HCT116 (cell line): ENCODE measurements at regions of chr4 and their contacts with region 1.

Region 1: DNA sequence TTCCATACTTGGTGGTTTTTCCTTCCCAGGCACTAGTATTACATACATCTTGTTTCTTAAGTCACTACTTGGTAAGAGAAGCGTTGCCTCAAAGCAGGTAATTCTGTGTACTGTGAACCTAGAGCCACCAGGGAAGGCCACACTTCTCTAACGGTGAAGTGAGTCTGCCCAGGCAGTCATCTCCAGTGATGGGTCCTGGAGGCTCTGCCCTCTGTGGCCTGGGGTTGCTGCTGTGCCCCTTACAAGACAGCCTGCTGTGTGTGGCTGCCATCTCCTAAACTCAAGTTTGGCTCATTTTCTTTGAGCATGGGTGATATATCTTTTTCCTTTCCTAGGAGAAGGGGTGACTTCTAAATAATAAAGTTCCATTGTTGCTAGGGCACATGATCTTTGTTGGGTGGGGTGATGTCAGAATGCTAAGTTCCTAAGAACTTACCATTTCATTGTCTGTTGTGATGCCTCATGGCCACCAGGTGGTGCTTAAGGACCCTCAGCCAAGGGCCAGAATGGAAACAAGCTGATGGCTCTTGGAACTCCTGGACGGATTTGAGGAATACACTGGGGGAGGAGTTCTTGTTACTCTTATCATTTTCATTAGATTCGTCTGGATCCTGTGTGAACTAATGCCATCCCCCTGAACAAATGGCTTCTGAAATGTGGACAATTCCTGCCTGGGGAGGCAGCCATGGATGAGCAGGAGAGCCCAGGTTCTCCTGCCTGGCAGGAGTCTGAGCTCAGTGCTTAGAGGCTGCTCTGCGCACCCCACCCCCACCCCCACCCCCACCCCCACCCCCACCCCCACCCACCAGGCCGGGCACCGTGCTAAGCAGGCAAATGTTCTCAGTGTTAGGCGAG is 41.1 kb upstream of the WDR1 start:
- DNase-seq: peak; percentile 73
- ATAC-seq: peak; percentile 93
- H3K4me3 ChIP-seq: no peak overlapping the region
- H3K27ac ChIP-seq: no peak overlapping the region
- H3K4me1 ChIP-seq: peaks cover 3 to 8% of the 10 kb centered on the region in 2 experiments; a peak in 2 of 4 replicates
- H3K27me3 ChIP-seq: peaks cover 9% of the 10 kb centered on the region; the same call in 1 of the 2 replicates
- CTCF ChIP-seq: peak; percentile 83 to 87 (median 86)
- POLR2A ChIP-seq: no peak
- RAD21 ChIP-seq: peak; percentile 85

Region 2: DNA sequence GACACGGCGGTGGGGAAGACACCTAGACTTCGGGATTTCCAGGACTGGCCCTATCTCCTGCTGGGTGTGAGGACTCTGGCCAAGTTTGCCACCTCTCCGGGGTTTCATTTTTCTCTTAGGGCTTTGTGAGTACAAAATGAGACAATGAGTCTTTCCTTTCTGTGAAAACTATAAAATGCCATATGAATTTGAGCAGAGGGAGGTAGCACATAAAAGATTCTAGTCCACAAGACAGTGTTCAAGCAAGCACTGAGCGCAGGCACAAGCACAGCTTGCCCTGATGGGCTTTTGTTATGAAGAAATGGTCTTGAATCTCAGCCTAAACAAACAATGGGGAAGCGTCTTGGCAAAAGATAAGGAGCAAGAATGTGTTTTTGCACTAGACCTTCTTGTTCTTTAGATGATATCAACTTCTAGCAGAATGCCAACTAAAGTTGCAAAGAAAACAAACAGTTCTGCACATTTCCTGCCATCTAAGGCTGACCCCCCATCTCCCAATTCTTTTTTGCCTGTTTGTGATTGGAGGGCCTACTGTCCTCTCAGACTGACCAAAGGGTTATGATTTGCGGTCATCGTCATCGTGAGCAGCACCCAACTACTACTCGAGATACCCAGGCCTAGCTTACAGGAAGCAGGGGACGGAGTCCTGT is 372.6 kb after region 1 on chr4:
- CTCF ChIA-PET with region 1: interaction called, 12 read pairs
- POLR2A ChIA-PET with region 1: no interaction called
- RAD21 ChIA-PET with region 1: no interaction called
- intact Hi-C with region 1: no loop called
- DNase-seq: no peak
- ATAC-seq: no peak
- H3K4me3 ChIP-seq: peak overlapping the region in 1 of 2 experiments; percentile 7; a peak in 1 of 4 replicates
- H3K27ac ChIP-seq: peak overlapping the region; percentile 69
- H3K4me1 ChIP-seq: peaks cover 60 to 76% of the 10 kb centered on the region in 2 experiments
- H3K27me3 ChIP-seq: no peaks in the 10 kb centered on the region
- CTCF ChIP-seq: no peak
- POLR2A ChIP-seq: no peak
- RAD21 ChIP-seq: no peak